Activated naive CD4-positive, alpha-beta T cell treated with anti-CD3 and anti-CD28 coated beads for 36 hours (primary cell): ENCODE measurements at regions of chr3 and their contacts with region 1.

Region 1: DNA sequence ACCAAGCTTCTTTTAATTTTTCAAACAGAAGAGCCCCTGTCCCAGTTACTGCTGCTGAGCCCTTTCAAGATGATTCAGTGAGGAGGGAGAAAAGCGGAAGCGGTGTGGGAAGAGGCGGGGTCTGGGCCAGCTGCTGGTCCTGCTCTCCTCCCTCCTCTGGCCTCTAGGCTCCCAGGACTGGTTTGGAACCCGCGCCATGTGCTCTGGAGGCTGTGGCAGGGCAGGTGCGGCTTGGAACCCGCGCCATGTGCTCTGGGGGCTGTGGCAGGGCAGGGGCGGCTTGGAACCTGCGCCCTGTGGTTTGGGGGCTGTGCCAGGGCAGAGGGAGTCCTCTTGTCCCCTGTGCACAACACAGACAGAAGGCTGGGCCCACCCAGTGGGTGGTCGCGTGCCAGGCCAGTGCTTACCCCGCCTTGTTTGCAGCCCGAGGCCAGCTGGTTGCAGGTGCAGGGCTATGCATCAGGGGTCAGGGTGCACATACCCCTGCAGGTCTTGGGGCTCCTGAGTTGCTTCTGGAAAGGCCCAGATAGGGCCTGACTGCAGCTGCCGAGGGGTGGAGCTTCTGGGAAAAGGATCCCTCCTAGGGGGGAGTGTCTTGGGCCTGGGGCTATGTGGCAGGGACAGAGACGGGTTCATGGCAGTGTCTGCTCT is 12.2 kb downstream of the ALG1L2 start:
- DNase-seq: peak; percentile 68
- H3K4me3 Mint-ChIP-seq: peak overlapping the region; percentile 39
- H3K27ac Mint-ChIP-seq: no peak overlapping the region
- H3K4me1 Mint-ChIP-seq: peaks cover 23% of the 10 kb centered on the region
- H3K27me3 Mint-ChIP-seq: no peaks in the 10 kb centered on the region

Region 2: DNA sequence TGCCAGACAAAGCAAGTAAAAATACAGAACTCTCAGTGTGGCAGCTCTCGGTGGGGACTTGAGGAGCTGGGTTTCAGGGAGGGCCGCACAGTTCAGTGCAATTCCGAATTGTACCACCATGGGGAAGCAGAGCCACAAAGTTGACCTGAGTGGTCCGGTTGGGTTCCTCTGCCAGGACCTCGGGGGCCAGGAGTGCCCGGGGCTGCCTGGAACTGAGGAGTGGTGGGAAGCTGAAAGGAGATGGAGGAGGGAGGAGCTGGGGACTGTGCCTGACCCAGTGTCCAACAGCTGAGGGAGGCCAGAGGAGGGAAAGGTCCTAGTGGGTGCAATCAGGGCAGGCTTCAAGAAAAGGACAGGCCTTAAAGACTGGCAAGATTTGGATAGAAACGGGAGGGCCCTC is 151.6 kb before region 1 on chr3:
- CTCF ChIA-PET with region 1: interaction called, 24 read pairs
- intact Hi-C with region 1: loop called (anchors 2 kb)
- DNase-seq: peak; percentile 59
- H3K4me3 Mint-ChIP-seq: no peak overlapping the region
- H3K27ac Mint-ChIP-seq: no peak overlapping the region
- H3K4me1 Mint-ChIP-seq: no peaks in the 10 kb centered on the region
- H3K27me3 Mint-ChIP-seq: peaks cover 2% of the 10 kb centered on the region